ENCODE measurements at regions of chr5 and their contacts with region 1.

Region 1: GRCh38 chr5:129094087-129094923 is at the start of gene ISOC1:
- DNase-seq: peak; percentile 97
- H3K4me3 ChIP-seq: peak within 1 kb of the TSS; percentile 86 to 98
- H3K27ac ChIP-seq: peak within 1 kb of the TSS; percentile 44 to 93; a peak in 3 of 4 replicates
- H3K4me1 ChIP-seq: peaks cover 0 to 29% of the 10 kb centered on the region in 2 experiments; a peak in 3 of 4 replicates
- H3K27me3 ChIP-seq: no peaks in the 10 kb centered on the region
- CTCF ChIP-seq: no peak
- EP300 ChIP-seq: no peak
- RAD21 ChIP-seq: peak; percentile 60
- polyA plus RNA-seq, gene ISOC1: 20.6 and 26.2 TPM in 2 replicates

Region 2: GRCh38 chr5:129053438-129053837 is 40.9 kb before region 1 on chr5:
- CTCF ChIA-PET with region 1: interaction called, 10 read pairs
- POLR2A ChIA-PET with region 1: no interaction called
- DNase-seq: no peak
- H3K4me3 ChIP-seq: no peak overlapping the region
- H3K27ac ChIP-seq: no peak overlapping the region
- H3K4me1 ChIP-seq: peaks cover 0 to 4% of the 10 kb centered on the region in 2 experiments; a peak in 2 of 4 replicates
- H3K27me3 ChIP-seq: no peaks in the 10 kb centered on the region
- CTCF ChIP-seq: no peak
- EP300 ChIP-seq: no peak
- RAD21 ChIP-seq: peak; percentile 57

Region 3: DNA sequence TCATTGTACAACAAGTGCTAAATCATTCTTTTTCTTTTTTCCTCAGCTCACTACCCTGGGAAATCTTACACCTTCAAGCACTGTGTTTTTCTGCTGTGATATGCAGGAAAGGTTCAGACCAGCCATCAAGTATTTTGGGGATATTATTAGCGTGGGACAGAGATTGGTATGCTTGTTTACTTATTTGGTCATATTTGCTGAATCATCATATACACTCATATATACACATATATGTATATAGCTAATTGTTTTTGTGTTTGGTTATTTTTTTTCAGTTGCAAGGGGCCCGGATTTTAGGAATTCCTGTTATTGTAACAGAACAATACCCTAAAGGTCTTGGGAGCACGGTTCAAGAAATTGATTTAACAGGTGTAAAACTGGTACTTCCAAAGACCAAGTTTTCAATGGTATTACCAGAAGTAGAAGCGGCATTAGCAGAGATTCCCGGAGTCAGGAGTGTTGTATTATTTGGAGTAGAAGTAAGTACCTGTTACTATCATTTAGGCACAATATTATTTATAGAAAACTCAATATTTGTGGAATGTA is 10.7 kb after region 1 on chr5:
- CTCF ChIA-PET with region 1: interaction called, 14 read pairs
- POLR2A ChIA-PET with region 1: no interaction called
- DNase-seq: no peak
- H3K4me3 ChIP-seq: no peak overlapping the region
- H3K27ac ChIP-seq: no peak overlapping the region
- H3K4me1 ChIP-seq: peaks cover 0 to 12% of the 10 kb centered on the region in 2 experiments; a peak in 2 of 4 replicates
- H3K27me3 ChIP-seq: no peaks in the 10 kb centered on the region
- CTCF ChIP-seq: no peak
- EP300 ChIP-seq: no peak
- RAD21 ChIP-seq: no peak

Region 4: GRCh38 chr5:129125810-129126209 is 31.5 kb after region 1 on chr5:
- CTCF ChIA-PET with region 1: interaction called, 29 read pairs
- POLR2A ChIA-PET with region 1: no interaction called
- DNase-seq: no peak
- H3K4me3 ChIP-seq: no peak overlapping the region
- H3K27ac ChIP-seq: no peak overlapping the region
- H3K4me1 ChIP-seq: peaks cover 0 to 10% of the 10 kb centered on the region in 2 experiments; a peak in 2 of 4 replicates
- H3K27me3 ChIP-seq: no peaks in the 10 kb centered on the region
- CTCF ChIP-seq: no peak
- EP300 ChIP-seq: no peak
- RAD21 ChIP-seq: no peak

Region 5: GRCh38 chr5:129377504-129377903 is 283.2 kb after region 1 on chr5:
- CTCF ChIA-PET with region 1: no interaction called
- POLR2A ChIA-PET with region 1: no interaction called
- DNase-seq: no peak
- H3K4me3 ChIP-seq: no peak overlapping the region
- H3K27ac ChIP-seq: no peak overlapping the region
- H3K4me1 ChIP-seq: no peaks in the 10 kb centered on the region
- H3K27me3 ChIP-seq: no peaks in the 10 kb centered on the region
- CTCF ChIP-seq: no peak
- EP300 ChIP-seq: no peak
- RAD21 ChIP-seq: no peak